ENCODE measurements at regions of chr1 and their contacts with region 1.

Region 1: GRCh38 chr1:246971090-246971721 is 36.7 kb downstream of the ZNF695 start:
- DNase-seq: peak; percentile 50
- H3K4me3 Mint-ChIP-seq: no peak overlapping the region
- H3K27ac Mint-ChIP-seq: no peak overlapping the region
- H3K4me1 Mint-ChIP-seq: no peaks in the 10 kb centered on the region
- H3K27me3 Mint-ChIP-seq: no peaks in the 10 kb centered on the region

Region 2: DNA sequence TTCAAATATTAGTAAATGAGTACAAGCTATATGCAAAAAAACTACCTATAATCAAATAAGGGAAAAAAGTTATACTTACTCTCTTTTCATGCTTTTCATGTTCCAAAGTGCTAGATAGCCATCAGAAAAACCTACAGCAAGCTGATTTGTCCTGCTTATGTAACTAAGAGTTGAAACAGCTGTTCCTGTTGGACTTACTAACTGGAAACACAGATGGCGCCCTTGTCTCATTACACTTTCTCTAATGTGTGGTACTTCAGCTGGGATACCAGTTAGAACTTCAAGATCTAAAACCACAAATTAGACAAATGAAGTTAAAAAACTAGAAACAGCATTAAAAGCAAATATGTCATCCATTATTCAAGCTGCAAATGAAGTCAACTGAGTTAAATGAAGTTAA is 63.7 kb before region 1 on chr1:
- CTCF ChIA-PET with region 1: interaction called, 19 read pairs
- DNase-seq: peak; percentile 33
- H3K4me3 Mint-ChIP-seq: no peak overlapping the region
- H3K27ac Mint-ChIP-seq: no peak overlapping the region
- H3K4me1 Mint-ChIP-seq: peaks cover 2% of the 10 kb centered on the region
- H3K27me3 Mint-ChIP-seq: no peaks in the 10 kb centered on the region

Region 3: GRCh38 chr1:247562198-247562597 is 591.0 kb after region 1 on chr1:
- CTCF ChIA-PET with region 1: no interaction called
- DNase-seq: no peak
- H3K4me3 Mint-ChIP-seq: no peak overlapping the region
- H3K27ac Mint-ChIP-seq: no peak overlapping the region
- H3K4me1 Mint-ChIP-seq: no peaks in the 10 kb centered on the region
- H3K27me3 Mint-ChIP-seq: no peaks in the 10 kb centered on the region

Measured in activated naive CD4-positive, alpha-beta T cell treated with anti-CD3 and anti-CD28 coated beads, Interleukin-2, amount 10 ng/mL, durations not matched to agents 7 days and 5 days (primary cell).